ENCODE measurements at regions of chr16 and their contacts with region 1.

Region 1: GRCh38 chr16:84738255-84739038 is 38.6 kb downstream of the USP10 start:
- DNase-seq: peak; percentile 62 to 90 (median 66)
- ATAC-seq: peak; percentile 73
- H3K4me3 ChIP-seq: no peak overlapping the region
- H3K4me3 Mint-ChIP-seq: peak overlapping the region; percentile 3
- H3K27ac ChIP-seq: no peak overlapping the region
- H3K27ac Mint-ChIP-seq: peak overlapping the region; percentile 25
- H3K4me1 ChIP-seq: peaks cover 40% of the 10 kb centered on the region
- H3K4me1 Mint-ChIP-seq: peaks cover 37% of the 10 kb centered on the region
- H3K27me3 ChIP-seq: no peaks in the 10 kb centered on the region
- H3K27me3 Mint-ChIP-seq: no peaks in the 10 kb centered on the region
- CTCF ChIP-seq: peak; percentile 95

Region 2: DNA sequence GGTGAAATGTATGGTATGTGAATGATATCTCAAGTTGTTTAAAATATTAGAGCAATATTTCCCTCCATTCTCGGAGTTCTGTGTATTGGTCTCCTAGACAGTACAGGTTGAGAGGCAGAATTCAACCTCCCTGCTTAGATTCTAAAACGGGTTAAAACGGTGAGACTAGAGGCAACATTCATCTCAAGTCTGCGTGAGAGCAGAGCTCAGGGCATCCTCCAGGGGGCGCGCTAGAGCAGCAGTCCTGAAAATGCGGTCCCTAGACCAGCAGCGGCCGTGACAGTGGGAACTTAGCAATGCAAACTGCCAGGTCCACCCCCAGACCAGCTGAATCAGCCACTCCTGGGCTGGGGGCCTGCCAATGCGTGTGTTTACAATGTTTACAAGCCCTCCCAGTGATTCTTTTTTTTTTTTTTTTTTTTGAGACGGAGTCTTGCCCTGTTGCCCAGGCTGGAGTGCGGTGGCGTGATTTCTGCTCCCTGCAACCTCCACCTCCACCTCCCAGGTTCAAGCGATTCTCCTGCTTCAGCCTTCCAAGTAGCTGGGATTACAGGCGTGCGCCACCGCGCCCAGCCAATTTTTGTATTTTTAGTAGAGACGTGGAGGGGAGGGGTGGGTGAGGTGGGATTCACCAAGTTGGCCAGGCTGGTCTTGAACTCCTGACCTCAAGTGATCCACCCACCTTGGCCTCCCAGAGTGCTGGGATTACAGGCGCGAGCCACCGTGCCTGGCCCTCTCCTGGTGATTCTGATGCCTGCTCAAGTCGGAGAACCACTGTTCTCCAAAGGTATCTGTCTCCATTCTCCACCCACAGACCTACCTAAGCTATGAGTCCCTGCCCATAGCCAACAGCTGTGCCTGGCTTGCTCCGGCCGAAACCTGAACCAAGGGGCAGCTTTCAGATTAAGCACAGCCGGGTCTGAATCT is 65.9 kb before region 1 on chr16:
- CTCF ChIA-PET with region 1: interaction called, 37 read pairs
- POLR2A ChIA-PET with region 1: interaction called, 3 read pairs
- intact Hi-C with region 1: no loop called
- DNase-seq: peak; percentile 68 to 90 (median 78)
- ATAC-seq: peak; percentile 96
- H3K4me3 ChIP-seq: no peak overlapping the region
- H3K4me3 Mint-ChIP-seq: no peak overlapping the region
- H3K27ac ChIP-seq: no peak overlapping the region
- H3K27ac Mint-ChIP-seq: no peak overlapping the region
- H3K4me1 ChIP-seq: peaks cover 6% of the 10 kb centered on the region
- H3K4me1 Mint-ChIP-seq: peaks cover 10% of the 10 kb centered on the region
- H3K27me3 ChIP-seq: no peaks in the 10 kb centered on the region
- H3K27me3 Mint-ChIP-seq: no peaks in the 10 kb centered on the region
- CTCF ChIP-seq: peak; percentile 98

Region 3: DNA sequence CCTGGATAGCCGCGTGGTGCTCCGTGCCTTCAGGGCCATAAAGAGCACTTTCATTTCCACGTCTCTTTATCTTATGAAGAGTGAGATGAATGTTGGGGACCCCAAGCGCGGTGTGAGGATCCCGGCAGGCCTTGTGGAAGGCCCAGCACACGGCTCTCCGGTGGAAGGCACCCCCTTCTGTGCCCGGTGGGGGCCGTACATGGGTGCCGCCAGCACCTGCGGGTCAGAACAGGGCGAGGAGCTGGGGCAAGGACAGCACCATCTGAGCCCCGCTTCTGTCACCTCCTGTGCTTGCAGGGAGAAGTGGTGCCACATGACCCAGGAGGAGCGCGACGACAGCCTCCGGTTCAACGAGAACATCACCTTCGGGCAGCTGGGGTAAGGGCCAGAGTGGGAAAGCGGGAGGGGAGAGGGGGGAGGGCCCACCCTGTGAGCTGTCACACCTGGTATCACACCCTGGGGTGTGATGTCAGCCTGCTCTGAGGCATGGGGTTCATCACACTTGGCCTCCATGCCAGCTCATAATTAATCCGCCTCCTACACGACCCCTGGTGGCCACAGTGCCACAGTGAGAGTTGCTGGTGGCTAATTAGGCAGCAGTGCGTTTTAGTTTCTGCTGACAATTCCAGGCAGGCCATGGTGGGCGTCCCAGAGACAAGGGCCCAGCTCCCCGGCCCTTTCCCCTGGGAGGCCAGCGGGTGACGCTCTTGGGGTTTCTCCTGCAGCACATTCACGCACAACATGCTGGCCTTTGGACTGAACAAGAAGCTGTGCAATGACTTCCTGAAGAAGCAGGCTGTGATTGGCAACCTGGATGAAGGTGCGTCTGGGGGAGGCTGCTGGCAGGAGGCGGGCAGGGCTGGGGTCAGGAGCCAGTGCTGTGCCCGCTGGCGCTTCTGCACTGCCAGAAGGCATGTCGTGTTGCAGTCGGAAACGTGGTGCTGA is 348.2 kb after region 1 on chr16:
- CTCF ChIA-PET with region 1: no interaction called
- POLR2A ChIA-PET with region 1: no interaction called
- intact Hi-C with region 1: no loop called
- DNase-seq: peak; percentile 61 to 86 (median 72)
- ATAC-seq: peak; percentile 81
- H3K4me3 ChIP-seq: no peak overlapping the region
- H3K4me3 Mint-ChIP-seq: no peak overlapping the region
- H3K27ac ChIP-seq: no peak overlapping the region
- H3K27ac Mint-ChIP-seq: no peak overlapping the region
- H3K4me1 ChIP-seq: peaks cover 34% of the 10 kb centered on the region
- H3K4me1 Mint-ChIP-seq: peaks cover 39% of the 10 kb centered on the region
- H3K27me3 ChIP-seq: no peaks in the 10 kb centered on the region
- H3K27me3 Mint-ChIP-seq: no peaks in the 10 kb centered on the region
- CTCF ChIP-seq: peak; percentile 55